HCT116 (cell line): ENCODE measurements at regions of chr2 and their contacts with region 1.

Region 1: GRCh38 chr2:48600204-48600813 is 17.3 kb upstream of the GTF2A1L start:
- DNase-seq: no peak
- ATAC-seq: peak; percentile 47; the same call in 1 of the 2 replicates
- H3K4me3 ChIP-seq: no peak overlapping the region
- H3K27ac ChIP-seq: no peak overlapping the region
- H3K4me1 ChIP-seq: peaks cover 0 to 16% of the 10 kb centered on the region in 2 experiments; a peak in 2 of 4 replicates
- H3K27me3 ChIP-seq: no peaks in the 10 kb centered on the region
- CTCF ChIP-seq: peak; percentile 55 to 84 (median 63); a peak in 4 of 6 replicates
- POLR2A ChIP-seq: no peak
- RAD21 ChIP-seq: peak; percentile 80

Region 2: GRCh38 chr2:48946449-48947048 is 346.2 kb after region 1 on chr2:
- CTCF ChIA-PET with region 1: no interaction called
- POLR2A ChIA-PET with region 1: no interaction called
- RAD21 ChIA-PET with region 1: no interaction called
- intact Hi-C with region 1: loop called (anchors 2 kb)
- DNase-seq: peak; percentile 23
- ATAC-seq: peak; percentile 80
- H3K4me3 ChIP-seq: no peak overlapping the region
- H3K27ac ChIP-seq: no peak overlapping the region
- H3K4me1 ChIP-seq: no peaks in the 10 kb centered on the region
- H3K27me3 ChIP-seq: peaks cover 6% of the 10 kb centered on the region; the same call in 1 of the 2 replicates
- CTCF ChIP-seq: peak; percentile 63 to 83 (median 69)
- POLR2A ChIP-seq: no peak
- RAD21 ChIP-seq: peak; percentile 79

Region 3: DNA sequence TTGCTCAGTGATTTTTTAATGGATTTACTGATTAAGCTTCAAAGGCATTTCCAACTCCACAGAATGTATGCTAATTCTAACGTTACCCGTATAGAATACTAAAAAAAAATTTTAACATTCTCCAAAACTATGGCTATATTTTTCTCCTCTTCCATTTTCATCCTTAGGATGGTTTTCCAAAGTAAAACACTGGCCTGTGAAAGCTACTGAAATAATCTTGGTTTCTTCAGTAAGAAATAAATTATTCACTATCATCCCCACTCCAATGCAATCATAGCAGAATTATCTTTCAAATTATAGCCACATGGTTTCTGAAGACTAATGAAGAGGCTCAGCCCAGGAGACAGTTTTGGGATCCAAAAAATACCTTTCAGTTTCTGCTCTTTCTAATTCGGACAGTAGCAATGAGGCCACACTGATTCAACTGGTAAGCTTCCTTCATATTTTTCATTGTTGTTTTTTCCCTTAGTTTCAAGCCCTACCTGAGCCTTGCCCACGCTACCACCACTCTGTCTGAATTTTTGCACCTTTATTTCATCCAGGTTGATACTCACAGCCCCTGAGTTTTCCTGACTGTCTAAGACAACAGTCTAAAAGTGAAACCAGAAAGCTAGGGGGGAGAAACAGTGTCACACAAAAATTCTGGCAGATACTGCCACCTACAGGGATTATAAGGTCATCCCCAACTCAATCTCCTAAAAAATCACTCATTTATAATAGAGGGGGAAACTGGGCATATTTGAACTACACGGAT is 1543.7 kb after region 1 on chr2:
- CTCF ChIA-PET with region 1: interaction called, 3 read pairs
- POLR2A ChIA-PET with region 1: no interaction called
- RAD21 ChIA-PET with region 1: no interaction called
- intact Hi-C with region 1: loop called (anchors 5 kb)
- DNase-seq: no peak
- ATAC-seq: no peak
- H3K4me3 ChIP-seq: no peak overlapping the region
- H3K27ac ChIP-seq: no peak overlapping the region
- H3K4me1 ChIP-seq: no peaks in the 10 kb centered on the region
- H3K27me3 ChIP-seq: no peaks in the 10 kb centered on the region
- CTCF ChIP-seq: peak; percentile 4 to 32 (median 25); a peak in 2 of 6 replicates
- POLR2A ChIP-seq: no peak
- RAD21 ChIP-seq: peak; percentile 19; the same call in 1 of the 2 replicates

Region 4: GRCh38 chr2:50401772-50402653 is 1801.7 kb after region 1 on chr2:
- CTCF ChIA-PET with region 1: interaction called, 12 read pairs
- POLR2A ChIA-PET with region 1: no interaction called
- RAD21 ChIA-PET with region 1: no interaction called
- intact Hi-C with region 1: loop called (anchors 1 kb)
- DNase-seq: peak; percentile 56
- ATAC-seq: peak; percentile 64
- H3K4me3 ChIP-seq: no peak overlapping the region
- H3K27ac ChIP-seq: no peak overlapping the region
- H3K4me1 ChIP-seq: no peaks in the 10 kb centered on the region
- H3K27me3 ChIP-seq: peaks cover 8% of the 10 kb centered on the region; the same call in 1 of the 2 replicates
- CTCF ChIP-seq: peak; percentile 54 to 98 (median 90); a peak in 5 of 6 replicates
- POLR2A ChIP-seq: no peak
- RAD21 ChIP-seq: peak; percentile 81

Region 5: GRCh38 chr2:50492477-50492851 is 1892.2 kb after region 1 on chr2:
- CTCF ChIA-PET with region 1: interaction called, 3 read pairs
- POLR2A ChIA-PET with region 1: no interaction called
- RAD21 ChIA-PET with region 1: no interaction called
- intact Hi-C with region 1: loop called (anchors 1 kb)
- DNase-seq: peak; percentile 35
- ATAC-seq: peak; percentile 82
- H3K4me3 ChIP-seq: no peak overlapping the region
- H3K27ac ChIP-seq: no peak overlapping the region
- H3K4me1 ChIP-seq: no peaks in the 10 kb centered on the region
- H3K27me3 ChIP-seq: no peaks in the 10 kb centered on the region
- CTCF ChIP-seq: peak; percentile 51 to 72 (median 66); a peak in 5 of 6 replicates
- POLR2A ChIP-seq: no peak
- RAD21 ChIP-seq: peak; percentile 73